ENCODE measurements at regions of chr3 and their contacts with region 1.

Region 1: DNA sequence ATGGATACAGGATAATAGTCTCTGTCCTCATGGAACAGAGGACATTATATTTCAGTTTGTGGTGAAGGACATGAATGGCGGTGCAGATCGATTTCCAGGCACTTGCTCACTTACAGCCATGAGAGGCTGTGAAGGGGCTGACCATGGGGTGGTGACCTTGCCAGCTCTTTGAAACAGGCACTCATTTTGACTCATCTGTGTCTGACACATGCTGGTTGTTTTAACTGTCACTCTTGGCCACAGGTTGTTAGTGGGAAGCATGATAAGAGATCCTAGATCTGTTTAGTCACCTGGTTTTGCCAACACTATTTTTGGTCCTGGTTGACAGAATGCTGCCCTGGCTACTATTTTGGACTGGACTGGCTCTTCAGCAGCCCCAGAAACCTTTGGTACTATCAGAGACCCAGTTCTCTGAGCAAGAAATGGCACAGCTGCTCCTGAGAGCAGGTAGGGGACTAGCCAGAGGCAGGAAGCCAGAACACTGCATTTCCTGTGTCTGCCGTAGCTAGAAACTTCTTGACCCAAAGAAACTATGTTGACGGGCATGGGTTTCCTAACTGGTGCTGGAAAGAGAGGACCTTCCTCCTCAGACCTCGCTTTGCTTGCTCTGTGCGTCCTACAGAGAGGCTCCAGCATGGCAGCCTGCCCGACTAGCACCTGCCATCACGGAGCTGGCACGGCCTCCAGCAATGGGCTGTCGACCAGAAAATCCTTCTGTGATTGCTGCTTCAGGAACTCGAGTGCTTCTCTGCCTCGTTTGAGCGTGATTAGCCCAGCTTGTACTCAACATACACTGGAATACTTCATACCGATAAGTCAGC is 6.3 kb downstream of the PXYLP1 start:
- DNase-seq: peak; percentile 68 to 90 (median 85)
- ATAC-seq: peak; percentile 43 to 62 (median 52)
- H3K4me3 ChIP-seq: peak overlapping the region in 1 of 12 donors; percentile 5
- H3K27ac ChIP-seq: peak overlapping the region; percentile 67 to 92 (median 80)
- H3K4me1 ChIP-seq: peaks cover 0 to 75% (median 54%) of the 10 kb centered on the region in 12 donors
- H3K27me3 ChIP-seq: no peaks in the 10 kb centered on the region
- CTCF ChIP-seq: no peak
- POLR2A ChIP-seq: no peak

Region 2: GRCh38 chr3:141279077-141279967 is 41.4 kb after region 1 on chr3:
- intact Hi-C with region 1: loop called in 6 of 10 experiments (anchors 2 to 5 kb)
- DNase-seq: no peak
- ATAC-seq: peak; percentile 49 to 62 (median 58)
- H3K4me3 ChIP-seq: no peak overlapping the region
- H3K27ac ChIP-seq: peak overlapping the region in 8 of 12 donors; percentile 15 to 75 (median 41)
- H3K4me1 ChIP-seq: peaks cover 0 to 37% (median 20%) of the 10 kb centered on the region in 12 donors
- H3K27me3 ChIP-seq: no peaks in the 10 kb centered on the region
- CTCF ChIP-seq: peak; percentile 46 to 70 (median 60)
- POLR2A ChIP-seq: no peak

Measured in heart left ventricle (tissue), 16 donors.